ENCODE measurements at regions of chr2 and their contacts with region 1.

Region 1: GRCh38 chr2:219177552-219178376 is at the start of gene RETREG2:
- DNase-seq: peak; percentile 81
- H3K4me3 Mint-ChIP-seq: peak within 1 kb of the TSS; percentile 87
- H3K27ac Mint-ChIP-seq: peak within 1 kb of the TSS; percentile 98
- H3K4me1 Mint-ChIP-seq: peaks cover 70% of the 10 kb centered on the region
- H3K27me3 Mint-ChIP-seq: no peaks in the 10 kb centered on the region
- total RNA-seq, gene RETREG2: 95.1 to 102 TPM

Region 2: DNA sequence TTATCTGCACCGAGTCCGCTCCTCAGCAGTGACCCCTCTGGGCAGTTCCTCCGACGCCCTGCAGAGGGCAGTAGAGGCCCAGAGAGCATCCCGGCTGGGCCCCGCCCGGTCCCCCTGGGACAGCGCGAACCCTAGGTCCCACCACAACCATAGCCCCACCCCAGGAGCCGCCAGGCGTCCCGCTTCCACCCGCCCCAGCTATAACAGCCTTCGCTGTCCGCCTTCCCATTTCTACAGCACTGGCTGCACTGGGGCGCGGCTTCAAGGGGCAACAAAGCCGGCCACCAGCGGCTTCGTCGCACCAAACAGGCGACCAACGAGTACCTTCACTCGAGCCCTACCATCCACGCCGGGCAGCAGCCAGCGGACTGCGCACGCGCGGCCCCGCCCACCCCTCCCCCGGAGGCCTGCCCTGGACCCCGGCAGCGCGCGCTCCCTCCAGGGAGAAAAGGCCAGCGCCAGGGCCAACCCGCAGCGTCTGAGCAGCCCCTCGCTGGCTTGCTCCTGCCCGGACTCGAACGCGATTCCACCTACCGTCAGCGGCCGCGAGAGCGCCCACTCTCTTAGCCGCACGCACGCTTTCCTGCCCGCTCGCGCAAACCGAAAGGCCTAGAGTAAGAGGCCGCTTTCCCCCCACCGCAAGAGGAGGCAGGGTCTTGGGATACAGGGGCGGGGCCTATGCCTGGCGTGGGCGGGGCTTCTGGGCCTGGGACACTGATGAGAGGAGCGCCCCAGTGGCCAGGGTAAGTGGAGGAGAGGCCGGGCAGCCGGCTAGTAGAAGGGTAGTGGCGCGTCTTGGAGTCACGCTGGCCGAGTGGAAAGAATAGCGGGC is 17.4 kb before region 1 on chr2 and contains the start of gene NHEJ1:
- CTCF ChIA-PET with region 1: interaction called, 37 read pairs
- POLR2A ChIA-PET with region 1: no interaction called
- DNase-seq: peak; percentile 92
- H3K4me3 Mint-ChIP-seq: peak within 1 kb of the TSS; percentile 84
- H3K27ac Mint-ChIP-seq: peak within 1 kb of the TSS; percentile 96
- H3K4me1 Mint-ChIP-seq: peaks cover 31% of the 10 kb centered on the region
- H3K27me3 Mint-ChIP-seq: no peaks in the 10 kb centered on the region
- total RNA-seq, gene NHEJ1: 18.1 to 20.3 TPM

Region 3: GRCh38 chr2:219199470-219200211 is 21.9 kb after region 1 on chr2:
- CTCF ChIA-PET with region 1: interaction called, 40 read pairs
- POLR2A ChIA-PET with region 1: interaction called, 4 read pairs
- DNase-seq: no peak
- H3K4me3 Mint-ChIP-seq: no peak overlapping the region
- H3K27ac Mint-ChIP-seq: no peak overlapping the region
- H3K4me1 Mint-ChIP-seq: peaks cover 7% of the 10 kb centered on the region
- H3K27me3 Mint-ChIP-seq: no peaks in the 10 kb centered on the region

Region 4: DNA sequence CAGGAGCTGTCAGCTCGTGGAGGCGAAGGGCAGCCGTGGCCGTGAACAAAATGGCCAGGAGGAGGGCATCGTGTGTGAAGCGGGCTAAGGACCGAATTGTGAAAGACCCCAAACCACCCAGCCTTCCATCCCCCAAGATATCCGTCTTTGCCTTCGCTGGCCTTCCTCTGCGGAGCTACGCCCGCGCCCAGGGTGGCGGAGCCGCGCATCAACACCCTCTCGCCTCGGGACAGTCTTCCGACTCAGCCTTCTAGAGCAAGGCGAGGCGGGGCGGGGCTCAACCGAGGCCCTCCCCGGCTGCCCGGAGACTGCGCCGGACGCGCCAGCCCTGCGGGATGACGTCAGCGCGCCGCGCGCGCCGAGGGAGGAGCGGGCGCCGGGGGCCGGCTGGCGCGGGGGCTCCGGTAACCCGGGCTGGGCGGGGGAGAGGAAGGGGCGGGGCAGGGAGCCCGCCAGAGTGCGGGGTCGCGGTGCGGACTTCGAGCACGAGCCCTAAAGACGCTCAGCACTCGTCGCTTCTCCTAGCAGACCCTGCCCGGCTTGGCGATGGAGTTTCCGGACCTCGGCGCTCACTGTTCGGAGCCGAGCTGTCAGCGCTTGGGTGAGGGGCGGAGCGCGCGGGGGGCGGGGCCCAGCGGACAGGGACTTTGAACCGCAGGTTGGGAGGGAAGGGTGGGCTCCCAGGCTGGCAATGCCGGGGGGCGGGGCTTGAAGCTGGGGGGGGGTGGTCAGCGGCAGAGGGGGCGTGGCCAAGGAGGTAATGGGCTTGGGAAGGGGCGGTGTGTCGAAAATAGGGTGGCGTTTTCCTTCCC is 28.9 kb after region 1 on chr2 and contains the start of gene ZFAND2B:
- CTCF ChIA-PET with region 1: interaction called, 13 read pairs
- POLR2A ChIA-PET with region 1: interaction called, 4 read pairs
- DNase-seq: peak; percentile 95
- H3K4me3 Mint-ChIP-seq: peak within 1 kb of the TSS; percentile 80
- H3K27ac Mint-ChIP-seq: peak within 1 kb of the TSS; percentile 95
- H3K4me1 Mint-ChIP-seq: peaks cover 52% of the 10 kb centered on the region
- H3K27me3 Mint-ChIP-seq: no peaks in the 10 kb centered on the region
- total RNA-seq, gene ZFAND2B: 49.1 to 60.2 TPM

Region 5: GRCh38 chr2:219266886-219267285 is 89.1 kb after region 1 on chr2:
- CTCF ChIA-PET with region 1: no interaction called
- POLR2A ChIA-PET with region 1: no interaction called
- DNase-seq: no peak
- H3K4me3 Mint-ChIP-seq: no peak overlapping the region
- H3K27ac Mint-ChIP-seq: no peak overlapping the region
- H3K4me1 Mint-ChIP-seq: no peaks in the 10 kb centered on the region
- H3K27me3 Mint-ChIP-seq: no peaks in the 10 kb centered on the region